ENCODE measurements at regions of chrX and their contacts with region 1.

Region 1: GRCh38 chrX:427812-428725 is 41.4 kb upstream of the PPP2R3B start:
- DNase-seq: peak; percentile 19
- ATAC-seq: peak; percentile 54
- H3K4me3 ChIP-seq: peak overlapping the region in 1 of 3 experiments; percentile 30; a peak in 1 of 6 replicates
- H3K27ac ChIP-seq: no peak overlapping the region
- H3K4me1 ChIP-seq: no peaks in the 10 kb centered on the region
- H3K27me3 ChIP-seq: peaks cover 2 to 18% of the 10 kb centered on the region in 2 experiments; a peak in 4 of 5 replicates
- CTCF ChIP-seq: peak; percentile 71
- EP300 ChIP-seq: no peak
- POLR2A ChIP-seq: no peak
- RAD21 ChIP-seq: peak; percentile 47; the same call in 1 of the 2 replicates

Region 2: GRCh38 chrX:1124531-1124930 is 696.5 kb after region 1 on chrX:
- CTCF ChIA-PET with region 1: no interaction called
- POLR2A ChIA-PET with region 1: no interaction called
- in situ Hi-C with region 1: loop called (anchors 5 kb)
- intact Hi-C with region 1: loop called (anchors 5 kb)
- DNase-seq: no peak
- ATAC-seq: no peak
- H3K4me3 ChIP-seq: no peak overlapping the region
- H3K27ac ChIP-seq: no peak overlapping the region
- H3K4me1 ChIP-seq: no peaks in the 10 kb centered on the region
- H3K27me3 ChIP-seq: no peaks in the 10 kb centered on the region
- CTCF ChIP-seq: no peak
- EP300 ChIP-seq: no peak
- POLR2A ChIP-seq: no peak
- RAD21 ChIP-seq: no peak